Right cardiac atrium (tissue), 5 donors: ENCODE measurements at regions of chr4 and their contacts with region 1.

Region 1: DNA sequence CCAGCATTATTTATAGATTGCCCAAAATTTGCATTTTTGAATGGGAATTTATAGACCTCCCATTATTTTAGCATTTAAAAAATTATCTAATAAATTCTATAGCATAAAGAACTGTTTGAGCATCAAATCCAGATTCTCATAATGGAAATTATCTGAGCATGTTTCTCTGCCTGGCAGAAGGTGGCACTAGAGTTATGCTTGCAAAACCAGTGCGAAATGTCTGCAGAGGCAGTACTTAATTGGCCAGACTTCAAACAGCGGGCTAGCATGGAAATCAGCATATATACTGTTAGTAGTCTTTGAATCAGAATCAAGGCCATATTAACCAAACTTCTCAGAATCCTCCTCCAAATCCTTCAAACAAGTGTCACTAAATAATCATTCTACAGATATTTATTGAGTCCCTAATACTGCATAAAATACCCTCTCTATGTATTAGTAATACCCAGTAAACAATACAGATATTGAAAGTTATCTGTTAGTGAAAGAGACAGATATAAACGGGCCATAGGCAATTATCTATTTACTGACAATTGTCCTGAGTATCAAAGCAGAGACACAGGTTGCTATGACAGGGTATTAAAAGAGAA is 78.7 kb upstream of the DCLK2 start:
- DNase-seq: no peak
- ATAC-seq: peak; percentile 54 to 66
- H3K4me3 ChIP-seq: no peak overlapping the region
- H3K27ac ChIP-seq: no peak overlapping the region
- H3K4me1 ChIP-seq: no peaks in the 10 kb centered on the region
- H3K27me3 ChIP-seq: no peaks in the 10 kb centered on the region

Region 2: DNA sequence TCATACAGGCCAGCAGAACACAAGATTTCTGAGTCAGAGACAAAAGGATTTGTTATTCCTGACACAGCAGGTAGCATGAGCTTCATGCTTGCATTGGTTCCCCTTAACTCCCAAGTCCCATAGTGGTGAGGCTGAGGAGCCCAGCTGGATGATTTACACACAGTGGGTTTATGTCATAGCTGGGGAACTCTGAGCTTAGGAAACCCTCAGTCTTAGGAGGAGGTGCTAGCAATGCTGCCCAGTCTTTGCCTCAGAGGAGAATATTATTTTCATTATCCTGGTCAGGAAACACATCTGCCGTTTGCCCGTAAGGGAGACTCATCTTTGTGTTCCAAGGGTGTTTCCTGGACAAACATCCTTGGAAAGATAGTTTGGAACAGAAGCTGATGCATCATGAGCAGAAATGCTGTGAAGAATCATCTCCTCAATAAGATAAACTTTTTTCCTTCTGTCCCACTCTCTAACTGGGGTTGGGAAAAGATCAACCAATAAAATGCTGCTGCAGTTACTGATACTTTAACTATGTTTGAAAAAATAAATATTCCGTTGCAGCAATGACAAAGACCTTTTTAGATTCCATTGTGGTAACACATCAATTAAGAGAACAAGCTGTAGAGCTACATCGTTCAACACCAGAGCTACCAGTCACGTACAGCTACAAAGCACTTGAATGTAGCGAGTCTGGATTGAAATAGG is 225.5 kb after region 1 on chr4:
- intact Hi-C with region 1: loop called in 1 of 4 experiments (anchors 5 kb)
- DNase-seq: no peak
- ATAC-seq: no peak
- H3K4me3 ChIP-seq: no peak overlapping the region
- H3K27ac ChIP-seq: no peak overlapping the region
- H3K4me1 ChIP-seq: peaks cover 2% of the 10 kb centered on the region
- H3K27me3 ChIP-seq: no peaks in the 10 kb centered on the region

Region 3: DNA sequence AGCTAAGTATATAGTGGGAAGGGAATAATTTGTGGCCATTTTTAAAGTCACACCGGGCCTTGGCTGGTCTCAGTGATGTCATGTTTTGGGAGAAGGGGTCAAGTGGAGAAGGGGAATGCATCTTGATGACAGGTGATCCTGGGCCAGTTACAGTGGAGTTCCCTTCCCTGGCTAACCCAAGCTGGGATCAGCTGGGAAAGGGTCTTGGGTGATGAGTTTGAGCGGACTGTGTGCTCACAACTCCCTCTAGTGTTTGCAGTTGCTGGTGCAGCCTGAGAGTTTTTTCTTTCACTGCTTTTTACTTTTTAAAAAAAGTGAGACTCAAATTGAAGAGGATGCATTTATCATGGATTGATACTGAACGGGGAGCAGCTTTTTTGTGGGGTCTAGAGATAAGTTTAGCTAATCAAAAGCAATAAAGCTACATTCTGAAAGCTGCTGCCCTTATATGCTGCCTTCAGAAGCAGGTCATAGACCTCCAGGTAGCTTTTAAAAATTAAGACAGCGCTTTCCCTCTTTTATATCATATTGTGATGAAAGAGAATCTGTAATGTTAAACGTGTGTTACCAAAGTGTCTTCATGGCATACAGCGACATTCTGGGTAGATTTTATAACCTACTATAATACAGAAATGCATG is 243.4 kb after region 1 on chr4:
- intact Hi-C with region 1: loop called in 2 of 4 experiments (anchors 5 to 10 kb)
- DNase-seq: no peak
- ATAC-seq: peak in 1 of 2 donors; percentile 51
- H3K4me3 ChIP-seq: no peak overlapping the region
- H3K27ac ChIP-seq: no peak overlapping the region
- H3K4me1 ChIP-seq: no peaks in the 10 kb centered on the region
- H3K27me3 ChIP-seq: no peaks in the 10 kb centered on the region